ENCODE measurements at regions of chr9 and their contacts with region 1.

Region 1: DNA sequence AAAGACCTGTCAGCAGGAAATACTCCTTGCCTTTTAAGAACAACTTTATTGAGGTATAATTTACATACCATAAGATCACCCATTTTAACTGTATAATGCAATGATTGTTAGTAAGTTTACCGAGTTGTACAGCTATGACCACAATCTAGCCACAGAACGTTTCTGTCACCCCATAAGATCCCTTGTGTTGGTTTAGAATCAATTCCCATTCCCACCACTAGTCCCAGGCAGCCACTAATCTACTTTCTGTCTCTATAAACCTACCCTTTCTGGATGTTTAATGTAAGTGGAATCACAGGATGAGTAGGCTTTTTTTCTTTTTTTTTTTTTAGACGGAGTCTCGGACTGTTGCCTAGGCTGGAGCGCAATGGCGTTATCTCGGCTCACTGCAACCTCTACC is 4.4 kb downstream of the GPR107 start:
- DNase-seq: no peak
- H3K4me3 ChIP-seq: no peak overlapping the region
- H3K27ac ChIP-seq: no peak overlapping the region
- H3K4me1 ChIP-seq: peaks cover 0 to 3% (median 2%) of the 10 kb centered on the region in 4 experiments; a peak in 2 of 7 replicates
- H3K27me3 ChIP-seq: no peaks in the 10 kb centered on the region
- CTCF ChIP-seq: peak in 2 of 3 experiments; percentile 16 to 53; a peak in 2 of 4 replicates
- EP300 ChIP-seq: no peak
- POLR2A ChIP-seq: no peak
- RAD21 ChIP-seq: no peak; a peak in 1 of 4 replicates

Region 2: DNA sequence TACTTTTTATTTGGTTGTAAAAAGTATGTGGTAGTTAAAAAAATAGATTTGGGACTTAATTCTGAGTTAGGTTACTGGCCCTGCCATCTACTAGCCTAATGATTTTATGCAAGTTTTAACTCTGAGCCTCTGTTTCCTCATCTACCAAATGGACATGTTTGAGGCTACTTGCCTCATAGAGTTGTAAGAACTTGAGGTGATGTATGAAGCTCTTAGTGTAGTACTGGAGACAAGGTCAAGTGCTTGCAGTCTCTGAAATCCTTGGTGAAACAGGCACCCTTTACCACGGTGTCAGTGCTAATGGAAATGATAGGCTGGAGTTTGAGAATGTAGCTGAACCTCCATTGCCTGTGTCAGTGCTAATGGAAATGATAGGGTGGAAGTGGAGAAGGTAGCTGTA is 10.9 kb after region 1 on chr9:
- CTCF ChIA-PET with region 1: interaction called, 31 read pairs
- POLR2A ChIA-PET with region 1: interaction called, 5 read pairs
- DNase-seq: no peak
- H3K4me3 ChIP-seq: no peak overlapping the region
- H3K27ac ChIP-seq: no peak overlapping the region
- H3K4me1 ChIP-seq: peaks cover 0 to 3% (median 0%) of the 10 kb centered on the region in 4 experiments; a peak in 1 of 7 replicates
- H3K27me3 ChIP-seq: no peaks in the 10 kb centered on the region
- CTCF ChIP-seq: no peak
- EP300 ChIP-seq: no peak
- POLR2A ChIP-seq: no peak
- RAD21 ChIP-seq: no peak

Region 3: DNA sequence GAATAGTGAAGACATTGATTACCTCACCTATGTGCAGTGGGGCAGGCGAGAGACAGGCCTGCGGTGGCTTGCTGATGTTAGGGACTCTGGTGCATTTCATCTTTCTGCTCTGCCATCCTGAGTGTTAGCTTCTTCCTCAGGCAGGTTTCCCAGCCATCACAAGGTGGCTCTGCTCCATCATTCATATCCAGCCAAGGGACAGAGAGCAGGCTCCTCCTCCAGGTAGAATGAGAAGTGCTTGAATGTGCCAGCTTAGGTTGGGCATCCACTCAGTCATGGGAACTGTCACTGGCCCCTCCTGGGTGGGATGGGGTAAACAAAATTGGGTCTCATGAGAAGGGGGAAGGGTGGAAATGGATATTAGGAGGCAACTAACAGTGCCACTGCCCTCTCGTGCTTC is 20.4 kb after region 1 on chr9:
- CTCF ChIA-PET with region 1: interaction called, 10 read pairs
- POLR2A ChIA-PET with region 1: interaction called, 3 read pairs
- DNase-seq: no peak
- H3K4me3 ChIP-seq: no peak overlapping the region
- H3K27ac ChIP-seq: no peak overlapping the region
- H3K4me1 ChIP-seq: no peaks in the 10 kb centered on the region
- H3K27me3 ChIP-seq: no peaks in the 10 kb centered on the region
- CTCF ChIP-seq: no peak
- EP300 ChIP-seq: no peak
- POLR2A ChIP-seq: no peak
- RAD21 ChIP-seq: no peak

Measured in H1 (cell line).